MCF 10A (cell line): ENCODE measurements at regions of chr9 and their contacts with region 1.

Region 1: DNA sequence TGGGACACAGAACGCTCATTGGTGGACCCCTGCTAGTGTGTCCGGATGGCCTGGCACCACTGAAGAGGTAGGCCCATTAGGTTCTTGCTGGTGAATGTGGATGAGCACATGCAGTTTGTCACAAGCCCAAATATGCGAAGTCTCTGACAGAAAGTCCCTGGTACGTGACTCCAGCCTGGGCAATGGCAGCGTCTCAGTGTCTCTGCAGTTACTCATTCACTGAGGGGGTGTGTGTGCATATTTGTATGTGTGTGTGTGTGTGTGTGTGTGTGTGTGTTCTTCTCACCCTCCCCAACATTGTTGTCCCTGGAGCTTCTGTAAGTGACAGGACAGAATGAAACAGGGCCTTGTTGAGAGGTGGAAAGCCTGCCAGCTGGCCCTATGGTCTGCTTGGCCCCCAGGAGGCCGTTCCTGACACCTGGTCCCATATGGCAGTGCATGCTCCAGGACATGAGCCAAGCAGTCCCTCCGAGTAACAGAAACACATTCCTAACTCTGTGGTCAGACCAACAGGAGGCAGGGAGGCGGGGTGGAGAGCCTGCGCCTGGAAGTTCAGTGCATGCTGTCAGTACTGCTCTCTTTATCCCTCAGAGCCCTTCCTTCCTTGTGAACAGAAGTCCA is 169.9 kb downstream of the SLC28A3 start:
- DNase-seq: peak; percentile 79
- H3K4me3 Mint-ChIP-seq: no peak overlapping the region
- H3K27ac Mint-ChIP-seq: peak overlapping the region; percentile 69
- H3K4me1 Mint-ChIP-seq: peaks cover 21% of the 10 kb centered on the region
- H3K27me3 Mint-ChIP-seq: no peaks in the 10 kb centered on the region
- CTCF ChIP-seq: peak; percentile 17

Region 2: GRCh38 chr9:83920927-83921707 is 249.5 kb before region 1 on chr9 and contains the start of gene KIF27:
- CTCF ChIA-PET with region 1: interaction called, 10 read pairs
- POLR2A ChIA-PET with region 1: interaction called, 3 read pairs
- intact Hi-C with region 1: no loop called
- DNase-seq: peak; percentile 96
- H3K4me3 Mint-ChIP-seq: peak within 1 kb of the TSS; percentile 77
- H3K27ac Mint-ChIP-seq: peak within 1 kb of the TSS; percentile 92
- H3K4me1 Mint-ChIP-seq: peaks cover 10% of the 10 kb centered on the region
- H3K27me3 Mint-ChIP-seq: no peaks in the 10 kb centered on the region
- CTCF ChIP-seq: peak; percentile 11
- total RNA-seq, gene KIF27: 9.4 and 10.0 TPM in 2 replicates

Region 3: GRCh38 chr9:83992421-83992820 is 178.2 kb before region 1 on chr9:
- CTCF ChIA-PET with region 1: interaction called, 14 read pairs
- POLR2A ChIA-PET with region 1: interaction called, 3 read pairs
- intact Hi-C with region 1: no loop called
- DNase-seq: no peak
- H3K4me3 Mint-ChIP-seq: no peak overlapping the region
- H3K27ac Mint-ChIP-seq: no peak overlapping the region
- H3K4me1 Mint-ChIP-seq: peaks cover 11% of the 10 kb centered on the region
- H3K27me3 Mint-ChIP-seq: no peaks in the 10 kb centered on the region
- CTCF ChIP-seq: peak; percentile 20

Region 4: GRCh38 chr9:84187090-84187489 is 16.5 kb after region 1 on chr9:
- CTCF ChIA-PET with region 1: interaction called, 28 read pairs
- POLR2A ChIA-PET with region 1: interaction called, 8 read pairs
- intact Hi-C with region 1: no loop called
- DNase-seq: no peak
- H3K4me3 Mint-ChIP-seq: no peak overlapping the region
- H3K27ac Mint-ChIP-seq: no peak overlapping the region
- H3K4me1 Mint-ChIP-seq: peaks cover 4% of the 10 kb centered on the region
- H3K27me3 Mint-ChIP-seq: no peaks in the 10 kb centered on the region
- CTCF ChIP-seq: no peak

Region 5: GRCh38 chr9:84315278-84315877 is 144.7 kb after region 1 on chr9:
- CTCF ChIA-PET with region 1: interaction called, 6 read pairs
- POLR2A ChIA-PET with region 1: no interaction called
- intact Hi-C with region 1: loop called (anchors 5 kb)
- DNase-seq: peak; percentile 72
- H3K4me3 Mint-ChIP-seq: no peak overlapping the region
- H3K27ac Mint-ChIP-seq: no peak overlapping the region
- H3K4me1 Mint-ChIP-seq: peaks cover 23% of the 10 kb centered on the region
- H3K27me3 Mint-ChIP-seq: no peaks in the 10 kb centered on the region
- CTCF ChIP-seq: peak; percentile 79